ENCODE measurements at regions of chr16 and their contacts with region 1.

Region 1: GRCh38 chr16:81632392-81633146 is 146.5 kb upstream of the PLCG2 start:
- DNase-seq: peak; percentile 95
- H3K4me3 Mint-ChIP-seq: peak overlapping the region; percentile 64
- H3K27ac Mint-ChIP-seq: peak overlapping the region; percentile 96
- H3K4me1 Mint-ChIP-seq: peaks cover 66% of the 10 kb centered on the region
- H3K27me3 Mint-ChIP-seq: no peaks in the 10 kb centered on the region

Region 2: DNA sequence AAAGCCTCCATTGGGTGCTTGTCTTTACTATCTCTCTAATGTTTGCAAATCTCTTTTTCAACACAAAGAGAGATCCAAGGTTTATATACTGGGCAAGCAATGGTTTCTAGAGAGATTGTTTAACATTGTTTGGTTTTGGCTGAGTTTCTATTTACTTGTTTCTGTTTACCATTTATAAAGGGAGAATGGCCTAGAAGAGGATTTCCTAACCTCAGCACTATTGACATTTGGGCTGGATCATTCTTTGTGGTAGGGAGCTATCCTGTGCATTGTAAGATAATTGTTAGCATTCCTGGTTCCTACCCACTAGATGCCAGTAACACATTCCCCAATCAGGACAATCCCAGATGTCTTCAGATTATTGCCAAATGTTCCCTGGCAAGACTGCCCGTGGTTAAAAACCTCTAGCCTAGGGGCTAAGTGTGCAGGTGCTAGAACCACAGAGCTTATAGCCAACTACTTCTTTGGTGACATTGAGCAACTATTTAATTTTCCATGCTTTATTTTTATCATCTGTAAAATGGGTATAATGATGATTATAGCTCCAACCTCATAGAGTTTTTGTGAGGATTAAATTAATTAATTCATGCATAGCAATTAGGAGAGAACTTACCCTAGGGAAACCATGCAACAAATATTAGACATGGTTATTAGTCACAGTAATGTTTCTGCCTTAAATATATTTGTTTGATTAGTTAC is 1618.2 kb before region 1 on chr16:
- CTCF ChIA-PET with region 1: no interaction called
- intact Hi-C with region 1: no loop called
- DNase-seq: no peak
- H3K4me3 Mint-ChIP-seq: no peak overlapping the region
- H3K27ac Mint-ChIP-seq: no peak overlapping the region
- H3K4me1 Mint-ChIP-seq: no peaks in the 10 kb centered on the region
- H3K27me3 Mint-ChIP-seq: peaks cover 6% of the 10 kb centered on the region

Region 3: DNA sequence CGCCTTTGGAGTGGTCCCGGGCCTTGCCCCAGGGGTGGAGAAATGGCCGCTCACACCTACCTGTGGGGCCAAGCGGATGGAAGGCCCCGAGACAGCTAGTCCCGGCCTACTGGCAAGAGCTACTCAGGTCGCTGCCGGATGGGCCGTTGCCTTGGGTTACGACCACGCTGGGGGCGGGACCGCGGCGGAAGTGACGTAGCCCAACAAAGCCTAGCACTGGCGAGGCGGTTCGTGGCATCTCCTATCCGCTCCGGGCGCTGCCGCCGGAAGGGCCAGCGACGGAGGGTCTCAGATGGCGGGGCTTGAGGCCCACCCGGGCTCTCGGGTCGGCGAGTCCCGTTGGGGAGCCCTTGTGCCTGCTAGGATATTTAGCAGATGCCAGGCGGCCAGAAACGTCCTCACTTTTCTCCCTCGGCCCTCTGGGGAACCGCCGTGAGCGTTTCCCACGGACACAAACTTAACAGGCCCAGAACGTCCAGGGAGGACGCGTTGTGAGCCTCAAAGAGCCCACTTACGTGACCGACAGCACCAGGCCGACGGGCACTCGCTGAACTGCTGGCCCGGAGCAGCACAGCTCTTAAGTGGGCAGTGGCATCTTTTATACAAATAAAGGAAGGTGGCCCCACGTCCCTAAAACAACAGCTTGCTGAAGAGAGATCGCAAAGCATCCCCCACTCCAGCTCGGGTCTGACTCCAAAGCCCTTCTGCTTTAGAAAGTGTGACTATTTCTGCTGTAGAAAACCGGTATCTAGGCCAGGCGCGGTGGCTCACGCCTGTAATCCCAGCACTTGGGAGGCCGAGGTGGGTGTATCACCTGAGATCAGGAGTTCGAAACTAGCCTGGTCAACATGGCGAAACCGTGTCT is 555.3 kb before region 1 on chr16 and contains the start of gene C16orf46:
- CTCF ChIA-PET with region 1: no interaction called
- intact Hi-C with region 1: loop called (anchors 5 kb)
- DNase-seq: peak; percentile 99
- H3K4me3 Mint-ChIP-seq: no peak within 1 kb of the TSS
- H3K27ac Mint-ChIP-seq: no peak within 1 kb of the TSS
- H3K4me1 Mint-ChIP-seq: peaks cover 4% of the 10 kb centered on the region
- H3K27me3 Mint-ChIP-seq: no peaks in the 10 kb centered on the region
- total RNA-seq, gene C16orf46: 0.74 TPM in 1 of 2 experiments, not detected in the other

Region 4: DNA sequence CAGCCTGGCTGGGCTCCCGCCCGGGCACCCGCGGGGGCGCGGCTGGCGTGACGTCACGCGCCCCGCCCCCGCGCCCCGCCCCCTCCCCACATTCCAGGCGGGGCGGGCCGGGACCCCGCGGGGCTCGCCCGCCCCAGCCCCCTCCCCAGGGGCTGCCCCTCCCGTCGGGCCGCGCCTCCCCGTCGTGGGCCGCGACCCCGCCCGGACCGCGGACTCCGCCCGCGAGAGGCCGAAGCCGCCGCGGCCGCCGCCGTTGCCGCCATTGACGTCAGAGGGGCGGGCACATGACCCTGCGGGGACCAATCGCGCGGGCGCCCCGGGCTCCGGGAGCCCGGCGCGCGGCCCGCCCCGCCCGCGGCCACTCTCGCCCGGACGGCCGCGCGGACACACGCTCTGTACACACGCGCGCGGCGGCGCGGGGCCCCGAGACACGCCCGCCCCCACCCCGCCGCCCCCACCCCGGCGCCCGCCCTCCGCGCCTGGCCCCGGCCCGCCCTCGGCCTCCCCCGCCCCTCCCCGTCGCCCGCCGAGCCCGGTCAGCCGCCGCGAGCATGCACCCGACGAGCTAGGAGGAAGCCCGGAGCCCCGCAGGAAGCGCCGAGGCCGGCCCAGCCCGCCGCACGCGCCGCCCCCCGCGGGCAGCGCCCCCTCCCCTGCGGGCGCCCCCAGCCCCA is 188.0 kb before region 1 on chr16 and contains the start of gene CMIP:
- CTCF ChIA-PET with region 1: no interaction called
- intact Hi-C with region 1: loop called (anchors 5 kb)
- DNase-seq: peak; percentile 81
- H3K4me3 Mint-ChIP-seq: peak within 1 kb of the TSS; percentile 75
- H3K27ac Mint-ChIP-seq: peak within 1 kb of the TSS; percentile 57
- H3K4me1 Mint-ChIP-seq: peaks cover 33% of the 10 kb centered on the region
- H3K27me3 Mint-ChIP-seq: no peaks in the 10 kb centered on the region
- total RNA-seq, gene CMIP: 28.6 to 28.8 TPM

Region 5: GRCh38 chr16:81688182-81688581 is 55.6 kb after region 1 on chr16:
- CTCF ChIA-PET with region 1: no interaction called
- intact Hi-C with region 1: loop called (anchors 1 kb)
- DNase-seq: peak; percentile 73
- H3K4me3 Mint-ChIP-seq: no peak overlapping the region
- H3K27ac Mint-ChIP-seq: peak overlapping the region; percentile 18
- H3K4me1 Mint-ChIP-seq: peaks cover 15% of the 10 kb centered on the region
- H3K27me3 Mint-ChIP-seq: no peaks in the 10 kb centered on the region

Region 6: GRCh38 chr16:81715358-81716196 is 83.0 kb after region 1 on chr16:
- CTCF ChIA-PET with region 1: no interaction called
- intact Hi-C with region 1: loop called (anchors 1 kb)
- DNase-seq: peak; percentile 54
- H3K4me3 Mint-ChIP-seq: no peak overlapping the region
- H3K27ac Mint-ChIP-seq: peak overlapping the region; percentile 25
- H3K4me1 Mint-ChIP-seq: peaks cover 37% of the 10 kb centered on the region
- H3K27me3 Mint-ChIP-seq: no peaks in the 10 kb centered on the region

Region 7: GRCh38 chr16:81745704-81746558 is 113.4 kb after region 1 on chr16:
- CTCF ChIA-PET with region 1: no interaction called
- intact Hi-C with region 1: no loop called
- DNase-seq: peak; percentile 85
- H3K4me3 Mint-ChIP-seq: peak overlapping the region; percentile 78
- H3K27ac Mint-ChIP-seq: peak overlapping the region; percentile 82
- H3K4me1 Mint-ChIP-seq: peaks cover 14% of the 10 kb centered on the region
- H3K27me3 Mint-ChIP-seq: no peaks in the 10 kb centered on the region

Region 8: GRCh38 chr16:82192665-82193064 is 560.1 kb after region 1 on chr16:
- CTCF ChIA-PET with region 1: no interaction called
- intact Hi-C with region 1: loop called (anchors 5 kb)
- DNase-seq: peak; percentile 64
- H3K4me3 Mint-ChIP-seq: no peak overlapping the region
- H3K27ac Mint-ChIP-seq: peak overlapping the region; percentile 70
- H3K4me1 Mint-ChIP-seq: peaks cover 21% of the 10 kb centered on the region
- H3K27me3 Mint-ChIP-seq: peaks cover 5% of the 10 kb centered on the region